B cell (primary cell): ENCODE measurements at regions of chr17 and their contacts with region 1.

Region 1: DNA sequence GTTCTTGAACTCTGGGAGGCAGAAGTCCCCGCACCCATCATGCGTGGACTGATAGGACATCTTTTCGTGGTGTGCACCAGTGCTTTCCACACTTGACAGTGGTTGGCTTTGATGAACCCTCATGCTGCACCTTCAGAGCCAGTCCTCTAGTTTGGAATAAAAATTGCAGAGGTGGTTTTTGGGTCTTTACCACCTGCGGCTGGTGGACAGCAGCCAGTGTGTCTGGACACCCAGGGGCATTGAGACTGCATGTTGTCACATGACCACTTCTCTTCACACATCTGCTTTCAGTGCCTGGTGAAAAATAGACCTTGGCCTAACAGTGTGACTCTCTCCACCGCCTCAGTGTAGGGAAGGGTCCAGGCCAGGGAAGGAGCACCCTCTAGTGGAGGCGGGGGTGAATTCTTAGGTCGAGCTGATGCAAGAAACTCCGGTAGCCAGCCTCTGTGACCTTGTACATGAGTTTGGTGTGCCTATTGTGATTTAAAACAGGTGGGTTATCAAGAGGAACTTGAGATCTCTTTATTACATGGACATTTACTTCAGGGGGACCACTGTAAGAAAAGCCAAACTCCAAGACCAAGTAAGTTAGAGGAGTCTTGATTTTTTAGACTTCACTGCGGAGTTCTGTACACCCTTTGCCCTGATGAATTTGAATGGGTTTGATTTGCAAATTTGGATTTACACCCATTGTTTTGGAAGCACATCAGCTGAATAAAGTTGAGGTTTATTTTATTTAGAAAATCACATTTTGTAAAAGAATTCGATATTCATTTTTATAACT is 17.9 kb downstream of the GOSR2 start:
- DNase-seq: peak; percentile 76
- ATAC-seq: peak; percentile 85
- H3K4me3 ChIP-seq: no peak overlapping the region
- H3K4me3 Mint-ChIP-seq: no peak overlapping the region
- H3K27ac ChIP-seq: no peak overlapping the region
- H3K27ac Mint-ChIP-seq: no peak overlapping the region
- H3K4me1 ChIP-seq: peaks cover 5 to 19% of the 10 kb centered on the region in 2 donors
- H3K4me1 Mint-ChIP-seq: peaks cover 17% of the 10 kb centered on the region
- H3K27me3 ChIP-seq: no peaks in the 10 kb centered on the region
- H3K27me3 Mint-ChIP-seq: no peaks in the 10 kb centered on the region
- CTCF ChIP-seq: peak; percentile 82

Region 2: DNA sequence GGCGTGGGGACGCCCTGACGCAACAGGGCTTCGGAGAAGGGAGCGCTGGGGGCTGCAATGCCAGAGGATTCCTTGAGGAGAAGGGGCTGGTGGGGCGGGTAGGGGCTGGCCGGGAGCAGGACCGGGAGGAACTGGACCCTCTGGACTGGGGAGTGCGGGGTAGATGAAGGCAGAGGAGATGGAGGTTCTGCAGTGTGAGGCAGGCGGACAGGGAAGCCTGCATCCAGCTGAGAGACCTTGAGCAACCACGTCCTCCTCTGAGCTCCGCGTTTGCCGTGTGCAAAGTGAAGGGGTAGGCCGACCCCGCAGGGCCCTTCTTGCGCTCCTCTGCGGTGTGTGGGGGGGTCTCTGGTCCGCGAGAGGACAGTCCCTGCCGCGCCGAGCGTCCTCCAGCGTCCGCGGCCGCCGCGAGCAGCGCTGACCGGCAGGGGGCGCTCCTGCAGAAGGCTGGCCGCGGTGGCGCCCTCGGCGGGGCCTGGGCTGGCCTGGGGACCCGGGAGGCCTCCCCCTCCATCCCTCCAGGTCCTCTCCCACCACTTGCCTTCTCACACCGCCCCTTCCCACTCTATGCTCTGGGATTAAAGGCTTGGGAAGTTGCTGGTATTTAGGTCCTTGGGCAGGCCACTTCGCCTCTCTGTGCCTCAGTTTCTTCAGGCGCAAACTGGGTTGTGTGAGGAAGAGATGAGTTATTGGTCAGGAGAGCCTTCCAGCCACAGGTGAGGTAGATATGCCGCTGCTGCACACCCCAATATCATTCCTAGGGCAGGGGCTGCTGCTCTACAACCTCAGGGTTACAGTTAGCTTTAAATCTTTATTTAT is 99.0 kb before region 1 on chr17:
- CTCF ChIA-PET with region 1: interaction called, 3 read pairs
- POLR2A ChIA-PET with region 1: no interaction called
- intact Hi-C with region 1: loop called (anchors 5 kb)
- DNase-seq: peak; percentile 30
- ATAC-seq: peak; percentile 24
- H3K4me3 ChIP-seq: no peak overlapping the region
- H3K4me3 Mint-ChIP-seq: no peak overlapping the region
- H3K27ac ChIP-seq: no peak overlapping the region
- H3K27ac Mint-ChIP-seq: no peak overlapping the region
- H3K4me1 ChIP-seq: peaks cover 3 to 13% of the 10 kb centered on the region in 2 donors
- H3K4me1 Mint-ChIP-seq: peaks cover 5% of the 10 kb centered on the region
- H3K27me3 ChIP-seq: peaks cover 0 to 42% (median 19%) of the 10 kb centered on the region in 4 experiments
- H3K27me3 Mint-ChIP-seq: peaks cover 35% of the 10 kb centered on the region
- CTCF ChIP-seq: peak; percentile 73

Region 3: GRCh38 chr17:46917516-46917915 is 23.3 kb before region 1 on chr17:
- CTCF ChIA-PET with region 1: interaction called, 10 read pairs
- POLR2A ChIA-PET with region 1: no interaction called
- intact Hi-C with region 1: no loop called
- DNase-seq: no peak
- ATAC-seq: no peak
- H3K4me3 ChIP-seq: no peak overlapping the region
- H3K4me3 Mint-ChIP-seq: no peak overlapping the region
- H3K27ac ChIP-seq: no peak overlapping the region
- H3K27ac Mint-ChIP-seq: no peak overlapping the region
- H3K4me1 ChIP-seq: no peaks in the 10 kb centered on the region
- H3K4me1 Mint-ChIP-seq: peaks cover 6% of the 10 kb centered on the region
- H3K27me3 ChIP-seq: no peaks in the 10 kb centered on the region
- H3K27me3 Mint-ChIP-seq: peaks cover 4% of the 10 kb centered on the region
- CTCF ChIP-seq: no peak

Region 4: DNA sequence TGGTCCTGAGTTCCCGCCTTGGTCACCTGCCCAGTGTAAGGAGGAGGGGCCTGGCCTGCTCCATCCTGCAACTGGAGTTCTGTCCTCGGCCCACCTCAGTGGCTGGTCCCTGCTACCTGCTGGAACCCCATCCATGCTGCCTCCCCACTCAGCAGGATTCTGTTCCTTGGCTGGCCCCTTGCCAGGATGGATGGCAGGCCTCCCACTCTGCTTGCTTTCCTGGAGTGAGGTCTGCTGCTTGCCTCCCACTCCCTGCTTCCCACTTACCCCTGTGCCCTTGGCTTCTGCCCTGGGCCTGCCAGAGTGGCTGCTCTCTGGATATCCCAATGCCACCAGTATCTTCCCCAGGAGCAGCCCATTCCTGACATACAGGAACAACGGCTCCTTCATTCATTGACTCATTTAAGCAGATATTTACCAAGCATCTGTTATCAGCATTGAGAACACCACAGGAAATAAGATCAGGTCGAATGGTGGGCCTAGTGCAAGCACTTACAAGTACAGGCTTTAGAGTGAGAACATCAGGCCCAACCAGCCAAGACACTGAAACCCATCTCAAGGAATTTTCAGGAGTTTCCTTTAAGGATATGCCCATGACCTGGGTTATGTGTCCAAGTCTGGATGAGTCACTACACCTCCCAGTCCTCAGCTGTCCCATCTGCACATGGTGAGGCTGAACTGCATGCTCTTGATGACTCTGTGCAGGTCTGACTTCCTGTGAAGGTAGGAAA is 55.2 kb after region 1 on chr17:
- CTCF ChIA-PET with region 1: interaction called, 41 read pairs
- POLR2A ChIA-PET with region 1: no interaction called
- intact Hi-C with region 1: loop called (anchors 1 kb)
- DNase-seq: no peak
- ATAC-seq: no peak
- H3K4me3 ChIP-seq: no peak overlapping the region
- H3K4me3 Mint-ChIP-seq: no peak overlapping the region
- H3K27ac ChIP-seq: no peak overlapping the region
- H3K27ac Mint-ChIP-seq: no peak overlapping the region
- H3K4me1 ChIP-seq: peaks cover 23 to 40% of the 10 kb centered on the region in 2 donors
- H3K4me1 Mint-ChIP-seq: peaks cover 34% of the 10 kb centered on the region
- H3K27me3 ChIP-seq: no peaks in the 10 kb centered on the region
- H3K27me3 Mint-ChIP-seq: no peaks in the 10 kb centered on the region
- CTCF ChIP-seq: no peak

Region 5: GRCh38 chr17:47004906-47005305 is 64.1 kb after region 1 on chr17:
- CTCF ChIA-PET with region 1: interaction called, 41 read pairs
- POLR2A ChIA-PET with region 1: interaction called, 6 read pairs
- intact Hi-C with region 1: loop called (anchors 1 kb)
- DNase-seq: no peak
- ATAC-seq: no peak
- H3K4me3 ChIP-seq: no peak overlapping the region
- H3K4me3 Mint-ChIP-seq: no peak overlapping the region
- H3K27ac ChIP-seq: no peak overlapping the region
- H3K27ac Mint-ChIP-seq: no peak overlapping the region
- H3K4me1 ChIP-seq: peaks cover 7 to 14% of the 10 kb centered on the region in 2 donors
- H3K4me1 Mint-ChIP-seq: peaks cover 11% of the 10 kb centered on the region
- H3K27me3 ChIP-seq: no peaks in the 10 kb centered on the region
- H3K27me3 Mint-ChIP-seq: no peaks in the 10 kb centered on the region
- CTCF ChIP-seq: no peak